GM10248 (cell line): ENCODE measurements at regions of chr9 and their contacts with region 1.

Region 1: DNA sequence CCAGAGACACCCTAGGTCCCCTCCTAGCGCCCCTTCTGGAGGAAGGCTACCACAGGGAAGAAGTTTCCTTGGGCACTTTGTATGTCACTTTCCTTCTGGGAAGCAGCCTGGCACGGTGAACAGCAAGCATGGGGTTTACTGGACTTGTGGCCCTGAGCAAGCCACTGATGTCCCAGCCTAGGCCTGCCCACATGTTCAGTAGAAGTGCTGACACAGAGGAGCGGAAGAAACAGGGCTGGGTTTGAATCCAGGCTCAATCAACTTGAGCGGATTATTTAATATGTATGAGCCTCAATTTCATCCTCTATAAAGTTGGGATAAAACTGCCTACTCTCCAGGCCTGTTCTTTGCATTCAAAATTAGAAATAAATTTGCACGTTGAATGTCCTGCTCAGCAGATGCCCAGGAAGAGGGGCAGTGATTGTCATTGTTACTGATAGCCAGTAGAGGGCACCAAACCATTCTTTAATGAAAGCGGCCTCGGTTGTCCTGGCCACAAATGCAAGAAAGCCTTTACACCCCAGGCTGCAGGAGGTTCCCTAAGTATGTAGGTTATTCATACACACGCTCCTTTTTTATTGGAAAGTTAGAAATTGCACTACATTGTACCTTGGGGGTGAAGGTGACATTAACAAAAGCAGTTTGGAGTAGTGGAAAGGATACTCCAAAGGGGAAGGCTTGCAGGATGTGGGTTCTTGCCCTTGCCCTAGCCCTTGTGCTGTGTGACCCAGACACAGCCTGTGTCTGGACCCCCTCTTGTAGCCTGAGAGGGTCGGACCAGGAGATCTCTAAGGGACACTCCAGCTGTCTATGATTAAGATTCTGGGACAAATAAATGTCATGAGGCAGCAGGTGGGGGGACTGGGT is 13.4 kb upstream of the XPA start:
- DNase-seq: peak; percentile 81
- CTCF ChIP-seq: peak; percentile 82

Region 2: GRCh38 chr9:97484134-97484533 is 226.5 kb before region 1 on chr9:
- CTCF ChIA-PET with region 1: no interaction called
- POLR2A ChIA-PET with region 1: no interaction called
- DNase-seq: no peak
- CTCF ChIP-seq: no peak

Region 3: GRCh38 chr9:97696803-97697601 is 13.6 kb before region 1 on chr9 and contains the start of gene XPA:
- CTCF ChIA-PET with region 1: interaction called, 10 read pairs
- POLR2A ChIA-PET with region 1: no interaction called
- DNase-seq: peak; percentile 99
- CTCF ChIP-seq: no peak

Region 4: GRCh38 chr9:97900738-97901565 is 190.4 kb after region 1 on chr9:
- CTCF ChIA-PET with region 1: interaction called, 17 read pairs
- POLR2A ChIA-PET with region 1: no interaction called
- DNase-seq: peak; percentile 54
- CTCF ChIP-seq: peak; percentile 77